HepG2 (cell line): ENCODE measurements at regions of chr15 and their contacts with region 1.

Region 1: DNA sequence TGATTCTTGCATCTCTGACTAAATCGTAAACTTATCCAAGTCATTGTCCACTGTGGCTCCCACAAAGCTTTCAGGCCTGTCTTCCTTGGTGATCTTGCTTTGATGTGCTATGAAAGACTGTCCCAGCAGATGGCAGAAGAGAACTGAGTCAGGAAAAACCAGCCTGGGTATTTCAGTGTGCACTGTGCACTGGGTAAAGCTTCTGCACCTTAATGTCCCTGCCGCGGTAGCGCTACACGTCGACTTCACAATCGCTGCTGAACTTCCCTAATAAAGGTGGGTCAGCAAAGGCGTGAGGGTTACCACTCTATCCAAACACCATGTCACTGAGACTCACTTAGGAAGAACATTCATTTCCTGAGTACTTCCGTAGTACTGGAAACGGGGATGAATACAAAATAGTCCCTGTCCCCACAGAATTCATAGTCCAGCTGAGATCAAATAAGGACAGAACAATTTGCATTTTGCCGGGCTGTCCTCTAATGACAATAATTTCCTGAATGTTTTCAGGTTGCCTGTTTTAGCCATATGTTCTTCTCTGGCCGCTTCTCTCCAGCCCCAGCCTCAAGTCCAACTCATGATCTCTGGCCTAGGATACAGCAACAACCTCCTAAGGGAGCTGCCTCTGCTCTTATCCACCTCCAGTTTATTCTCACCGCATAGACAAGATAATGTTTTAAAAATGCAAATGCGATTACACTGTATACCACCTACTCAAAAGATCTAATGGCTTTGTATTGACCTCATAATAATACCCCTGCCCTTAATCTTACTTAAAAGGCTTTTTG is 83.6 kb upstream of the AKAP13 start:
- DNase-seq: peak; percentile 75
- ATAC-seq: peak; percentile 96
- H3K4me3 ChIP-seq: peak overlapping the region; percentile 45 to 67 (median 64)
- H3K27ac ChIP-seq: no peak overlapping the region
- H3K4me1 ChIP-seq: peaks cover 24% of the 10 kb centered on the region
- H3K27me3 ChIP-seq: no peaks in the 10 kb centered on the region
- CTCF ChIP-seq: peak; percentile 86
- EP300 ChIP-seq: no peak
- POLR2A ChIP-seq: no peak
- RAD21 ChIP-seq: peak; percentile 59; the same call in 1 of the 2 replicates

Region 2: GRCh38 chr15:85178308-85178707 is 118.5 kb before region 1 on chr15:
- CTCF ChIA-PET with region 1: no interaction called
- POLR2A ChIA-PET with region 1: no interaction called
- in situ Hi-C with region 1: no loop called
- intact Hi-C with region 1: no loop called
- DNase-seq: no peak
- ATAC-seq: no peak
- H3K4me3 ChIP-seq: peak overlapping the region in 2 of 3 experiments; percentile 3 to 23; a peak in 2 of 6 replicates
- H3K27ac ChIP-seq: no peak overlapping the region
- H3K4me1 ChIP-seq: peaks cover 25% of the 10 kb centered on the region
- H3K27me3 ChIP-seq: 0 out of 5 replicates have a peak, but pooled peaks cover 0 to 1% of the 10 kb centered on the region in 2 experiments
- CTCF ChIP-seq: no peak
- EP300 ChIP-seq: no peak
- POLR2A ChIP-seq: no peak
- RAD21 ChIP-seq: no peak

Region 3: GRCh38 chr15:85307709-85308090 is 10.9 kb after region 1 on chr15:
- CTCF ChIA-PET with region 1: no interaction called
- POLR2A ChIA-PET with region 1: no interaction called
- in situ Hi-C with region 1: no loop called
- intact Hi-C with region 1: loop called (anchors 2 kb)
- DNase-seq: no peak
- ATAC-seq: no peak
- H3K4me3 ChIP-seq: no peak overlapping the region
- H3K27ac ChIP-seq: no peak overlapping the region
- H3K4me1 ChIP-seq: peaks cover 7% of the 10 kb centered on the region
- H3K27me3 ChIP-seq: no peaks in the 10 kb centered on the region; a peak in 1 of 5 replicates
- CTCF ChIP-seq: no peak
- EP300 ChIP-seq: no peak
- POLR2A ChIP-seq: no peak
- RAD21 ChIP-seq: no peak

Region 4: DNA sequence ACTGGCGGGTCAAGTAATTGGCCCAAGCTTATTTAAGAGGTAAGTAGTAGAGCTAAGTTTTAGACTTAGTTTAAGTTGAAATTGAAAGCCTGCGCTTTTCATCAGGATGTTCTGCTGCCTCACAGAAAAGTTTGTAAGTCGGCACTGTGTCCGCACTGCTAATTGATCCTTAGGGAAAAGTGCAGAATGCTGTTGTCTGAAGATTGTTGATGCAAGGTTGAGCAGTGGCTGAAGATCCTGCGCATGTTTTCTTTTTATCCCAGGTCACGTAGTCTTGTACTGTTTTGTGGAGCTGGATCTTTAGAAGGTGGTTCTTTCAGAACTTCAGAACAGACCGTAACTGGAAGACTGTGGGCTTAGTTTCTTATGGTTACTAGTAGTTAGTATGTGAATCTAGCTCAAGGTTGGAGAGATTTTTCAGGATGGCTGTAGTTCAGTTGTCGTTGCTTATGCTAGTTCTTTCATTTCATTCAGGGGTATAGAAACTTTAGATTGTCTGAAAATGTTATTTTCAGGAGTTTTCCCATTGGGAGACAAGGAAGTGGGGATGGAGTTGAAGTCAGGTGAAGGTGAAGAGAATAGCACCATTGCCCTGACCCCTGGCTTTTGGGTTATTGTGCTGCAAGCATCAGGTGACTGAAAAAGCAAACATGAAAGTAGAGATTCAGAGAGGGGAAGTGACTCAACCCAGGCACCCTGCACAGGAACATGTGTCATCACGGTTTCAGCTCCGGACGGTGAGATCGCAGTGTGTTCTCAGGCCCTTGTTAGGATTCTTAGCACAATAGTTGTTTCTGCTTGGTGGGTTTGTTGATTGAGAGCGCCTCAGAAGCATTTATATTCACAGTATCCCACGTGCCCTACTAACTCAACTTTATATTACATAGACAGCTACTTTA is 116.4 kb after region 1 on chr15:
- CTCF ChIA-PET with region 1: interaction called, 4 read pairs
- POLR2A ChIA-PET with region 1: interaction called, 3 read pairs
- in situ Hi-C with region 1: no loop called
- intact Hi-C with region 1: loop called (anchors 1 kb)
- DNase-seq: peak; percentile 90
- ATAC-seq: peak; percentile 100
- H3K4me3 ChIP-seq: no peak overlapping the region
- H3K27ac ChIP-seq: peak overlapping the region; percentile 52
- H3K4me1 ChIP-seq: peaks cover 34% of the 10 kb centered on the region
- H3K27me3 ChIP-seq: no peaks in the 10 kb centered on the region; a peak in 1 of 5 replicates
- CTCF ChIP-seq: 0 out of 2 replicates have a peak, but pooled peaks have one; percentile 11
- EP300 ChIP-seq: peak; percentile 14 to 83; a peak in 2 of 4 replicates
- POLR2A ChIP-seq: no peak
- RAD21 ChIP-seq: no peak

Region 5: DNA sequence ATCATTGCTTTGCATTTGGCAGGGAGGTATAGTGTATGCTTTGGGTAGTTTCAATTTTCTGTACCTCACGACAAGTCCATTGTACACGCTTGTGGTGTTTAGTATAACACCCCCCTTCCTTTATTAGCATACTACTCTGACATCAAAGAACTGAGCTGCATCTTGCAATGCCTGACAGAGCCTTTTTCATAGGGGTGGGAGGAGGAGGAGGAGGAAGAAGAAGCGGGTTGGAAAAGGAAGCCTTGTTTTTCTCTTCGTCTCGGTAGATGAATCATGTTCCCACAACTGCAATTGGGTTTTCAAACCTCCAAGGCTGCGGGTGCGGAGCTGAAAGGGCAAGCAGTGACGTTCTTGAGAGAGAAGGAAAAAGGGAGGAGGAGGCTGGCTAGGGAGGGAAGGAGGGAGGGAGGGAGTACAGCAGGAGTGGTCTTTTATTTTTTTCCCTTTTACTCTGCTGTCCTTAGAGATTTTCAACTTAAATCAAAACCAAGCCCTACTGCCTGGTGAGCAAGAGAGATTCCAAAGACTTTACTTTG is 322.2 kb after region 1 on chr15:
- CTCF ChIA-PET with region 1: no interaction called
- POLR2A ChIA-PET with region 1: no interaction called
- in situ Hi-C with region 1: no loop called
- intact Hi-C with region 1: loop called (anchors 10 kb)
- DNase-seq: no peak
- ATAC-seq: no peak
- H3K4me3 ChIP-seq: no peak overlapping the region
- H3K27ac ChIP-seq: no peak overlapping the region
- H3K4me1 ChIP-seq: peaks cover 22% of the 10 kb centered on the region
- H3K27me3 ChIP-seq: no peaks in the 10 kb centered on the region
- CTCF ChIP-seq: no peak
- EP300 ChIP-seq: no peak
- POLR2A ChIP-seq: no peak
- RAD21 ChIP-seq: no peak

Region 6: GRCh38 chr15:85831415-85832113 is 534.8 kb after region 1 on chr15:
- CTCF ChIA-PET with region 1: no interaction called
- POLR2A ChIA-PET with region 1: no interaction called
- in situ Hi-C with region 1: loop called (anchors 25 kb)
- intact Hi-C with region 1: loop called (anchors 5 kb)
- DNase-seq: peak; percentile 47
- ATAC-seq: peak; percentile 95
- H3K4me3 ChIP-seq: no peak overlapping the region; a peak in 1 of 6 replicates
- H3K27ac ChIP-seq: no peak overlapping the region
- H3K4me1 ChIP-seq: peaks cover 11% of the 10 kb centered on the region
- H3K27me3 ChIP-seq: peaks cover 1 to 18% of the 10 kb centered on the region in 2 experiments; a peak in 4 of 5 replicates
- CTCF ChIP-seq: peak; percentile 85
- EP300 ChIP-seq: no peak
- POLR2A ChIP-seq: no peak
- RAD21 ChIP-seq: peak; percentile 68; the same call in 1 of the 2 replicates